Right ventricle myocardium superior (tissue), 1 donor: ENCODE measurements at regions of chr2 and their contacts with region 1.

Region 1: DNA sequence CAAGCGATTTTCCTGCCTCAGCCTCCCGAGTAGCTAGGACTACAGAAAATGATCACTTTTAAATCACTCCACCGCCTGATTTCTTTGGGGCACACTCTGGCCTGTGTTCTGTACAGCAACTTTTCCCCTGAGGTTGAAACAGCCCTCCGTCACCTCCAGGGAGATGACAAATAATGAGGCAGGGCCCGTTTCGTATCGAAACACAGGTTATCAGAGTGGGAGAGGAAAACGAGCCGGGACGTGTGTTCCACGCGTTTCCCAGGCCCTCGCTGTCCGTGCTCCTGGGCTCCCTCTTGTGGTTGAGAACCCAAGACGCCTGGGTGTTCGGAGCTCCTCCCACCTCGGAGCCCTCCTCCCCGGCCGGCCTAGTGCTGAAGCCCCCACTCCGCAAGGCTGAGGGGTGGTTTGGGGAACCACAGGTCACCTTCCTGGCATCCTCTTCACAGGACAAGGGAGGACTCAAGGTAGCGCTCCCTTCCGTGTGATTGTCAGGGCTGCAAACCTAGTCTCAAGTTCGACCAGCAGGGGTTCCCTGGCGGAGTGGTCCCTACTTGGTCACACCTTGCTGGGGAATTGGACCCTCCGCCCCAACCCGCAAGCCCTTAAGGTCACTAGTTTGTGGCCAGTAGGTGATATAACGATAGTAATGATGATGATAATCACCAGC is 12.8 kb downstream of the ATP6V1B1 start:
- DNase-seq: peak; percentile 84
- ATAC-seq: peak; percentile 98

Region 2: DNA sequence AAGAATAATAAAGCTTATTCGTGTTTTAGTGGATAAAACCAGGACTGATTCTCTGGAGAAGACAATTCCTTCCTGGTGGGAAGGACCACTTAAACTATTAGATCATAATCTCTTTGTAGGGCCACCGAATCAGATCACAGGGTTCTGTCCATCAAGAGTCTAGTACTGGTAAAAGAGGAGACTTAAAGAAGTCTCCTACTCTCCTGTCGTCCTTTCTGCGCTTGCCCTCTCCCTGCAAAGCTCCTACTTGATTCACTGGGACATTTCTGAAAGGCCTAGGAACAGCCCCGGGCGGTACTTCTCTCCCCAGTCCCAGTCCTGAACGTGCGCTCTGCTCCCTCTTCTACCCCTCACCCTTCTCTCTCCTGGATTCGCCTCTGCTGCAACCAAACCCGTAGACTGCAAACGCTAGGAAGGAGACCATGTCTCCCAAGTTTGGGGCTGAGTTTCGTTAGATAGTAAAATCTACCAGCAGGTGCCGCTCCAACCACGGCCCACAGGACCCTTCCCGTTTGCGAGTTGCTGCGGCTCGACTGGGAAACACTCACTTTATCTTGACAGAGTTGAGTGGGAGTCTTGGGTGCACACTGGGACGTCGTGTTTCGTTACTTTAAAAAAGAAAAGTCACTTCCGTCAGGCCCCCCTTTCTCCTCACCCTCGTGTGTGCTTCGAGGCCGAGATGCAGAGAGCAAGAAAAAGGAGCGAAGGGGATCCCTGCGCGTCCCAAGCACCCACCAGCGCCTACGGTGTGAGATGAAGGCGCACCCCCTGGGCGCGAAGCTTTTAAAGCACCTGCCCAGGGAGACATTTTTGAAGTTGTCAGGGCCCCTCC is 158.9 kb before region 1 on chr2:
- intact Hi-C with region 1: loop called (anchors 10 kb)
- DNase-seq: peak; percentile 73
- ATAC-seq: peak; percentile 82

Region 3: GRCh38 chr2:70871398-70872211 is 76.9 kb before region 1 on chr2:
- intact Hi-C with region 1: loop called (anchors 5 kb)
- DNase-seq: peak; percentile 90
- ATAC-seq: peak; percentile 99